ENCODE measurements at regions of chr17 and their contacts with region 1.

Region 1: GRCh38 chr17:44186307-44187130 is at the start of gene TMUB2:
- DNase-seq: peak; percentile 89
- ATAC-seq: peak; percentile 95
- H3K4me3 ChIP-seq: peak within 1 kb of the TSS; percentile 92 to 97
- H3K27ac ChIP-seq: peak within 1 kb of the TSS; percentile 95
- H3K4me1 ChIP-seq: peaks cover 7% of the 10 kb centered on the region; the same call in 1 of the 2 replicates
- H3K27me3 ChIP-seq: no peaks in the 10 kb centered on the region
- CTCF ChIP-seq: no peak
- total RNA-seq, gene TMUB2: 30.7 TPM

Region 2: DNA sequence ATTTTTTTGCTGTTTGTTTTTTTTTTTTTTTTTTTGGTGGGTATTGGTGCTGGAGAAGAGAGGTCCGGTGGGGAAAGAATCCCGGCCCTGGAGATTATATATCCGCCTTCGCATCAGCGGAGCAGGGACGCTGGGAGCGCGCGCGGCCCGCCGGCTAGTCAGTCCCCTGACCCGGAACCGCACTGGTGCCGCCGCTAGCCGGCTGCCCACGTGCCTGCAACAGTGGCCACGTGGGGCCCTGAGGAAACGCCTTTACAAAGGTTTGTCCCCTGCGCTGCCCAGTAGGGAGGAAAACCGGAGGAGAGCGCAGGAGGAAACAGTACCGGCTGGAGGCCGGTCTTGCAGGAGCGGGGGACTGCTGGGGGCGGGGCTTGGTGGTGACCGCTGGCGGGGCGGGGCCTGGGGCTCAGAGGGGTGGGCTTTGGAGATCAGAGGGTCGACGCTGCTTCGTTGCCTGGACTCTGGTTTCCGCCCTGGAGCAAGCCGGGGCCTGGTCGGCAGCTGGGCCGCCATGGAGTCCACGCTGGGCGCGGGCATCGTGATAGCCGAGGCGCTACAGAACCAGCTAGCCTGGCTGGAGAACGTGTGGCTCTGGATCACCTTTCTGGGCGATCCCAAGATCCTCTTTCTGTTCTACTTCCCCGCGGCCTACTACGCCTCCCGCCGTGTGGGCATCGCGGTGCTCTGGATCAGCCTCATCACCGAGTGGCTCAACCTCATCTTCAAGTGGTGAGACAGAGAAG is 115.9 kb before region 1 on chr17 and contains the start of gene G6PC3:
- CTCF ChIA-PET with region 1: no interaction called
- POLR2A ChIA-PET with region 1: no interaction called
- in situ Hi-C with region 1: no loop called
- intact Hi-C with region 1: no loop called
- DNase-seq: no peak
- ATAC-seq: peak; percentile 91
- H3K4me3 ChIP-seq: peak within 1 kb of the TSS; percentile 71 to 87
- H3K27ac ChIP-seq: peak within 1 kb of the TSS; percentile 95
- H3K4me1 ChIP-seq: peaks cover 20% of the 10 kb centered on the region
- H3K27me3 ChIP-seq: no peaks in the 10 kb centered on the region
- CTCF ChIP-seq: no peak
- total RNA-seq, gene G6PC3: 42.7 TPM

Region 3: GRCh38 chr17:44199553-44200477 is 13.3 kb after region 1 on chr17 and contains the start of gene ATXN7L3:
- CTCF ChIA-PET with region 1: no interaction called
- POLR2A ChIA-PET with region 1: interaction called, 10 read pairs
- in situ Hi-C with region 1: no loop called
- intact Hi-C with region 1: no loop called
- DNase-seq: no peak
- ATAC-seq: peak; percentile 90
- H3K4me3 ChIP-seq: peak within 1 kb of the TSS; percentile 70 to 75
- H3K27ac ChIP-seq: peak within 1 kb of the TSS; percentile 95
- H3K4me1 ChIP-seq: peaks cover 14% of the 10 kb centered on the region
- H3K27me3 ChIP-seq: no peaks in the 10 kb centered on the region
- CTCF ChIP-seq: no peak
- total RNA-seq, gene ATXN7L3: 69.8 TPM

Measured in Panc1 (cell line).